GM12878 (cell line): ENCODE measurements at regions of chr2 and their contacts with region 1.

Region 1: DNA sequence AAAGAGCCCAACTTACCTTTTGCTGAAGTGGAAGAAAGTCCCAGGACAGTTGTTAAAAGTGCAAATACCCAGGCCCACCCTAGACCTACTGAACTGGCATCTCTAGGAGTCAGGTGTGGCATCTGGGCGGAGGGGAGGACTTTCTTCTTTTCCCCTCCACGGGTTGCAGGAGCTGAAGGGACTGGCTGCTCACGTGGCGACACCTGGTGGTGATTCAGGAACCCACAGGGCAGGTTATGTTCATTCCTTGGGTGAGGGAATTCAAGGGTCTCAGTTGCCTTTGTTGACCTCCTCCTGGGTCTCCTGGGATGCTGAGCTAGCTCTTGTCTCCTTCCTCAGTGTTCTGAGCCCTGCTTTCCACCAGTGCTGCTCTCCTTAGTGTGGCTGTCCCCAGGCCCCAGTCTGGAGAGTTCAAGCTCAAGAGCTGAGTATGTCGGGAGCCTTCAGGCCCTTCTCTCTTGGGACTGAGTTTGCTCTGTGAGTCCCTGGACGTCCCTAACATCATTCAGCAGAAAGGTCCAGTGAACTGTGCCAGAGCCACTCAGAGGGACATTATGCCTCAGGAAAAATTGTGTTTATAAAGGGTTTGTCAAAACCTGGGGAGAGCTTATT is 56.9 kb downstream of the DYSF start:
- DNase-seq: no peak
- ATAC-seq: peak; percentile 92
- H3K4me3 ChIP-seq: no peak overlapping the region
- H3K27ac ChIP-seq: no peak overlapping the region
- H3K4me1 ChIP-seq: no peaks in the 10 kb centered on the region
- H3K27me3 ChIP-seq: peaks cover 0 to 6% of the 10 kb centered on the region in 2 experiments; a peak in 2 of 4 replicates
- CTCF ChIP-seq: peak; percentile 85 to 94 (median 90)
- EP300 ChIP-seq: no peak
- POLR2A ChIP-seq: no peak
- RAD21 ChIP-seq: peak; percentile 80

Region 2: GRCh38 chr2:71018625-71019024 is 491.7 kb before region 1 on chr2:
- CTCF ChIA-PET with region 1: interaction called, 6 read pairs
- POLR2A ChIA-PET with region 1: no interaction called
- RAD21 ChIA-PET with region 1: no interaction called
- SMC1A ChIA-PET with region 1: no interaction called
- in situ Hi-C with region 1: no loop called
- intact Hi-C with region 1: loop called (anchors 5 kb)
- DNase-seq: no peak
- ATAC-seq: no peak
- H3K4me3 ChIP-seq: no peak overlapping the region
- H3K27ac ChIP-seq: no peak overlapping the region
- H3K4me1 ChIP-seq: no peaks in the 10 kb centered on the region
- H3K27me3 ChIP-seq: no peaks in the 10 kb centered on the region
- CTCF ChIP-seq: no peak
- EP300 ChIP-seq: no peak
- POLR2A ChIP-seq: no peak
- RAD21 ChIP-seq: no peak

Region 3: GRCh38 chr2:71226965-71227560 is 283.2 kb before region 1 on chr2 and contains the start of gene PAIP2B:
- CTCF ChIA-PET with region 1: interaction called, 5 read pairs
- POLR2A ChIA-PET with region 1: no interaction called
- RAD21 ChIA-PET with region 1: interaction called, 3 read pairs
- SMC1A ChIA-PET with region 1: no interaction called
- in situ Hi-C with region 1: no loop called
- intact Hi-C with region 1: loop called (anchors 2 kb)
- DNase-seq: peak; percentile 98
- ATAC-seq: peak; percentile 98
- H3K4me3 ChIP-seq: peak within 1 kb of the TSS; percentile 71
- H3K27ac ChIP-seq: no peak within 1 kb of the TSS
- H3K4me1 ChIP-seq: no peaks in the 10 kb centered on the region; the same call in 1 of the 2 replicates
- H3K27me3 ChIP-seq: no peaks in the 10 kb centered on the region
- CTCF ChIP-seq: no peak
- EP300 ChIP-seq: no peak
- POLR2A ChIP-seq: peak; percentile 78
- RAD21 ChIP-seq: no peak
- polyA plus RNA-seq, gene PAIP2B: 0.06 to 0.09 TPM

Region 4: DNA sequence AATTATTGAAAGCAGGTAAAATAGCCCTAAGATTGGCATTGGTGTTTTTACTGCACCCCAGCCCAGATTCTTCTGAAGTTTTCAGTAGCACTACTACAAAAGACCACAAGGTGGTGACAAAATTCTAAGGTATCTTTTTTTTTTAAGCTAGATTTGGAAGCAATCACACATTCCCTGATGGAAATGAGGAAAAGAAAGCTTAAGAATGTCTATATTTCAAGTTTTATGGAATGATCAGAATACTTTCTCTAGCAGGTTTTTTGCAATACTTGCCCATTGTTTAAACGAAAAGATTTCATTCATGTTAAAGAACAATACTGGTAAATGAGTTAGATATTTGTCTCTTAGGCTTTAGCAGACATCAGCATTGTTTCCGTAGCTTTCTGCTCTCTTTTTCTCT is 210.8 kb before region 1 on chr2:
- CTCF ChIA-PET with region 1: interaction called, 242 read pairs
- POLR2A ChIA-PET with region 1: interaction called, 9 read pairs
- RAD21 ChIA-PET with region 1: interaction called, 158 read pairs
- SMC1A ChIA-PET with region 1: interaction called, 74 read pairs
- in situ Hi-C with region 1: loop called (anchors 5 kb)
- intact Hi-C with region 1: loop called (anchors 1 kb)
- DNase-seq: no peak
- ATAC-seq: peak; percentile 54
- H3K4me3 ChIP-seq: no peak overlapping the region
- H3K27ac ChIP-seq: no peak overlapping the region
- H3K4me1 ChIP-seq: no peaks in the 10 kb centered on the region
- H3K27me3 ChIP-seq: no peaks in the 10 kb centered on the region
- CTCF ChIP-seq: peak; percentile 65 to 68 (median 67); a peak in 5 of 6 replicates
- EP300 ChIP-seq: no peak
- POLR2A ChIP-seq: no peak
- RAD21 ChIP-seq: peak; percentile 72

Region 5: GRCh38 chr2:71460595-71461303 is 49.6 kb before region 1 on chr2:
- CTCF ChIA-PET with region 1: interaction called, 12 read pairs
- POLR2A ChIA-PET with region 1: no interaction called
- RAD21 ChIA-PET with region 1: interaction called, 5 read pairs
- SMC1A ChIA-PET with region 1: no interaction called
- in situ Hi-C with region 1: no loop called
- intact Hi-C with region 1: no loop called
- DNase-seq: no peak
- ATAC-seq: no peak
- H3K4me3 ChIP-seq: no peak overlapping the region
- H3K27ac ChIP-seq: no peak overlapping the region
- H3K4me1 ChIP-seq: no peaks in the 10 kb centered on the region
- H3K27me3 ChIP-seq: peaks cover 0 to 3% of the 10 kb centered on the region in 2 experiments; a peak in 2 of 4 replicates
- CTCF ChIP-seq: peak; percentile 18 to 50 (median 36); a peak in 5 of 6 replicates
- EP300 ChIP-seq: no peak
- POLR2A ChIP-seq: no peak
- RAD21 ChIP-seq: 0 out of 2 replicates have a peak, but pooled peaks have one; percentile 10